Naive thymus-derived CD4-positive, alpha-beta T cell (primary cell): ENCODE measurements at regions of chr6 and their contacts with region 1.

Region 1: DNA sequence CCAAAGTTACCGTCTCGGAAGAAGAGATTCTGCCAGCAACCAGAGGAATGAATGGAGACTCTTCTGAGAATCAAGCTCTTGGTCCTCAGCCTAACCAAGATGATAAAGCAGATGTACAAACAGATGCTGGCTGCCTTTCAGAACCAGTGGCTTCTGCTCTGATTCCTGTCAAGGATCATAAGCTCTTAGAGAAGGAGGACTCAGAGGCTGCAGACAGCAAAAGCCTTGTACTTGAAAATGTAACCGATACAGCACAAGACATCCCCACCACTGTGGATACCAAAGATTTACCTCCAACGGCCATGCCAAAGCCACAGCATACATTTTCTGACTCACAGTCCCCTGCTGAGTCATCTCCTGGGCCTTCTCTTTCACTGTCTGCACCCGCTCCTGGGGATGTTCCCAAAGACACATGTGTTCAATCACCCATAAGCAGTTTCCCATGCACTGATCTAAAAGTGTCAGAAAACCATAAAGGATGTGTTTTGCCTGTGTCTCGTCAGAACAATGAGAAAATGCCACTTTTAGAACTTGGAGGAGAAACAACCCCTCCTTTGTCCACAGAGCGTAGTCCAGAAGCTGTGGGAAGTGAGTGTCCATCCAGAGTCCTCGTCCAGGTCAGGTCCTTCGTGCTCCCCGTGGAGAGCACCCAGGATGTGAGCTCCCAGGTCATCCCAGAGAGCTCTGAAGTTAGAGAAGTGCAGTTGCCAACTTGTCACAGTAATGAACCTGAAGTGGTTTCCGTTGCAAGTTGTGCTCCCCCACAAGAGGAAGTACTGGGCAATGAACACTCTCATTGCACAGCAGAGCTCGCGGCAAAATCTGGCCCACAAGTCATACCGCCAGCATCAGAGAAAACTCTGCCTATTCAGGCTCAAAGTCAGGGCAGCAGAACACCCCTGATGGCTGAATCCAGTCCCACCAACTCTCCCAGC is 109.6 kb downstream of the RTN4IP1 start:
- DNase-seq: peak; percentile 38 to 80 (median 72)
- ATAC-seq: peak; percentile 68
- H3K4me3 ChIP-seq: peak overlapping the region; percentile 69
- H3K4me3 Mint-ChIP-seq: peak overlapping the region; percentile 82 to 96 (median 93)
- H3K27ac ChIP-seq: peak overlapping the region; percentile 86
- H3K27ac Mint-ChIP-seq: peak overlapping the region; percentile 92 to 99 (median 95)
- H3K4me1 ChIP-seq: peaks cover 42 to 47% of the 10 kb centered on the region in 2 donors
- H3K4me1 Mint-ChIP-seq: peaks cover 36 to 87% (median 71%) of the 10 kb centered on the region in 7 donors
- H3K27me3 ChIP-seq: no peaks in the 10 kb centered on the region
- H3K27me3 Mint-ChIP-seq: no peaks in the 10 kb centered on the region

Region 2: DNA sequence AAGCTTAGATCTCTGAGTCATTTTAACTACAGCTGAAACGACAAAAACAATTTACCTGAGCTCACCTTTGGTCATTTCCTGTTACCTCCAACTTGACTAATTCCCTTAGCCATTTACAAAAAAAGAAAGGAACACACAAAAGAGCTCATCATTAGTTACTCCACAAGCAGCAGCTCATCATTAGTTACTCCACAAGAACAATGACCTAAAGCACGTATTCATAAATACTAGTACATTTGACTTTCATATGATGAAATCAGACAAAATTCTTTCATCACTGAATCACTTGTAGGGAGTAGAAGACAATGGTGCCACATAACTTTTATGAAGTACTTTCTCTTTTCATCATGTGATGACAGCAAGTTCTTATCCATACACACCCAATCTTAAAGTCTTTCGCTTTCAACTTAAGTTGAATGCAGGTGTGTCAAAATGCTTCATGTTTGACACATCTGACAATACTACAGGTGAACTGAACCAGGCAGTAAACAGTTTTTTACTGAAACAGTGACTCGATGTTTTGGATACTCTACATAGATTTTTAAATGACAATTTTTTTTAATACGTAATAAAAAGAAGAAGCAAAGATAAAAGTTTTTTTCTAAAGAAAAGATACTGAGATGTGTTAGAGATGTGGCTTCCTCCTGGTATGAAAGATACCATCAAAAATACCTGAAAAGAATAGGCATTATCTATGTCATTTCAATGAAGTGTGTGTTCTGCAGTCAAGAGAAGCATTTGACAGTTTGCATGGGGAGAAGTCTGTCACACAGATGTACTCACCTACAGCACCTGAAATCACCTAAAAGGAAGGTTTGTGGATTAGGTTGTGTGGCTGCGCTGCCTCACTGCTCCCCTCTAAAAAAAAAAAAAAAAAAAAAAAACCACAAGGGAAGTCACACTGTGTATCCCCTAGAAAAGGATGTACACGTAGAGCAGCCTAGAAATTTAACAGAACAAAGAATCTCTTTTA is 324.5 kb before region 1 on chr6:
- CTCF ChIA-PET with region 1: no interaction called
- POLR2A ChIA-PET with region 1: no interaction called
- intact Hi-C with region 1: loop called in 1 of 2 experiments (anchors 10 kb)
- DNase-seq: peak in 7 of 9 donors; percentile 43 to 70 (median 57)
- ATAC-seq: peak; percentile 81
- H3K4me3 ChIP-seq: peak overlapping the region; percentile 21
- H3K4me3 Mint-ChIP-seq: peak overlapping the region; percentile 19 to 80 (median 71)
- H3K27ac ChIP-seq: peak overlapping the region; percentile 30
- H3K27ac Mint-ChIP-seq: peak overlapping the region; percentile 64 to 91 (median 84)
- H3K4me1 ChIP-seq: peaks cover 30 to 36% of the 10 kb centered on the region in 2 donors
- H3K4me1 Mint-ChIP-seq: peaks cover 24 to 54% (median 41%) of the 10 kb centered on the region in 7 donors
- H3K27me3 ChIP-seq: no peaks in the 10 kb centered on the region
- H3K27me3 Mint-ChIP-seq: no peaks in the 10 kb centered on the region

Region 3: DNA sequence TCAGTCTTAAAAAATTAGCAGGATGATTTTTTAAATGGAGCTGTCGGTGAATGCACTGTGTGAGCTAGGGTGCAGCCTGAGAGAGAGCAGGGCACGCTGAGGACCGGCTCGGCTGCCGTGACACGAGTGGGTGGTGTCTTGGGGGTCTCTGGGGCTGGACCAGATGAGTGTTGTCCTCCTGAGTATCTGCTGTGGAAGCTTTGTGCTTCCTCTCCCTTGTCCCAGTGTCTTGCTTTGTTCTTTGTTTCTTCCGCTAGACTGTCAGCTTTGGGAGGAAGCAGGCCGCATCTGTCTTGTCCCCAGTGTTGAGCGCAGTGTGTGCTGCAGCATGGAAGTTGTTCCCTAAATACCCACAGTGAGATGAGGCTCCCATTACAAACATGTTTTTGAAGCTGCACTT is 20.2 kb after region 1 on chr6:
- CTCF ChIA-PET with region 1: interaction called, 3 read pairs
- POLR2A ChIA-PET with region 1: interaction called, 14 read pairs
- intact Hi-C with region 1: loop called in 1 of 2 experiments (anchors 1 kb)
- DNase-seq: no peak
- ATAC-seq: peak; percentile 47
- H3K4me3 ChIP-seq: no peak overlapping the region
- H3K4me3 Mint-ChIP-seq: peak overlapping the region in 1 of 10 donors; percentile 18
- H3K27ac ChIP-seq: no peak overlapping the region
- H3K27ac Mint-ChIP-seq: peak overlapping the region in 8 of 9 donors; percentile 10 to 85 (median 54)
- H3K4me1 ChIP-seq: peaks cover 19 to 20% of the 10 kb centered on the region in 2 donors
- H3K4me1 Mint-ChIP-seq: peaks cover 27 to 58% (median 46%) of the 10 kb centered on the region in 7 donors
- H3K27me3 ChIP-seq: no peaks in the 10 kb centered on the region
- H3K27me3 Mint-ChIP-seq: no peaks in the 10 kb centered on the region

Region 4: GRCh38 chr6:107026965-107027364 is 507.2 kb after region 1 on chr6:
- CTCF ChIA-PET with region 1: no interaction called
- POLR2A ChIA-PET with region 1: no interaction called
- intact Hi-C with region 1: loop called (anchors 5 kb)
- DNase-seq: no peak
- ATAC-seq: no peak
- H3K4me3 ChIP-seq: no peak overlapping the region
- H3K4me3 Mint-ChIP-seq: peak overlapping the region; percentile 4 to 99 (median 94)
- H3K27ac ChIP-seq: no peak overlapping the region
- H3K27ac Mint-ChIP-seq: peak overlapping the region in 5 of 9 donors; percentile 32 to 92 (median 63)
- H3K4me1 ChIP-seq: peaks cover 3 to 14% of the 10 kb centered on the region in 2 donors
- H3K4me1 Mint-ChIP-seq: peaks cover 20 to 35% (median 29%) of the 10 kb centered on the region in 7 donors
- H3K27me3 ChIP-seq: no peaks in the 10 kb centered on the region
- H3K27me3 Mint-ChIP-seq: no peaks in the 10 kb centered on the region